Caco-2 (cell line): ENCODE measurements at regions of chr1 and their contacts with region 1.

Region 1: DNA sequence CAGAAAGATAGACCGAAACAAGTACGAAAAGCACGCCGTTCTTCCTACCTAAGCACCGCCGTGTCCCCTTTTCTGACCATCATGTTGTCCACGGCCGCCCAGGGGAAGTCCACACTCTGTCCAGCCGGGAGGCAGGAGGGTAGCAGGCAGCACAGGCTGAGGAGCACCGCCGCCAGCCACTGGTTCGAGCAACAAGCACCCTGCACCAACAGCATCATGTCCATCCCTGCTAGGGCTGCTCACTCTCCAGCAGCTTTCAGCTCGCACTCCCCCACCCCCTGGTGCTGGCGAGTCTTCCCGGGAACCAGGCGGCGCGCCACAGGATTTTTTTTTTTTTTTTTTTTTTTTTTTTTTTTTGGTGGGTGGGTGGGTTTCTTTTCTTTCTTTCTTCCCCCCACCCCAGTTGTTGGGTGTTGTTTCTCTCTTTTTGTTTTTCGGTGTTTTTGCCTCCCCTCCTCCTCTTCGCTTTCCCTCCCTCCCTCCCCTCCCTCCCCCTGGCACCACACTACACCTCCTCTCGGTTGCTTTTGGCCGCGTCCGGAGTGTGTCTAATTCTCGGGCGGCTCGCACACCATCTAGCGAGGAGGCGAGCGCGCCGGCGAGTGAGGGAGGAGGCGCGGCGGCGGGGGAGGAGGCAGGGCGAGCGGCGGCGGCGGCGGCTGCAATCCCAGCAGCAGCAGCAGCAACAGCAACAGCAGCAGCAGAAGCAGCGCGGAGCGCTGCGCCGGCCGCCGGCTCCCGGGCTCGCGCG is at the start of gene NEGR1:
- DNase-seq: peak; percentile 54 to 69
- H3K4me3 ChIP-seq: peak within 1 kb of the TSS; percentile 43
- H3K4me3 Mint-ChIP-seq: no peak within 1 kb of the TSS
- H3K27ac Mint-ChIP-seq: no peak within 1 kb of the TSS
- H3K4me1 ChIP-seq: no peaks in the 10 kb centered on the region
- H3K4me1 Mint-ChIP-seq: no peaks in the 10 kb centered on the region
- H3K27me3 ChIP-seq: no peaks in the 10 kb centered on the region; the same call in 1 of the 2 replicates
- H3K27me3 Mint-ChIP-seq: peaks cover 10% of the 10 kb centered on the region
- CTCF ChIP-seq: no peak
- total RNA-seq, gene NEGR1: 0.05 TPM in 1 of 2 replicates, not detected in the other

Region 2: DNA sequence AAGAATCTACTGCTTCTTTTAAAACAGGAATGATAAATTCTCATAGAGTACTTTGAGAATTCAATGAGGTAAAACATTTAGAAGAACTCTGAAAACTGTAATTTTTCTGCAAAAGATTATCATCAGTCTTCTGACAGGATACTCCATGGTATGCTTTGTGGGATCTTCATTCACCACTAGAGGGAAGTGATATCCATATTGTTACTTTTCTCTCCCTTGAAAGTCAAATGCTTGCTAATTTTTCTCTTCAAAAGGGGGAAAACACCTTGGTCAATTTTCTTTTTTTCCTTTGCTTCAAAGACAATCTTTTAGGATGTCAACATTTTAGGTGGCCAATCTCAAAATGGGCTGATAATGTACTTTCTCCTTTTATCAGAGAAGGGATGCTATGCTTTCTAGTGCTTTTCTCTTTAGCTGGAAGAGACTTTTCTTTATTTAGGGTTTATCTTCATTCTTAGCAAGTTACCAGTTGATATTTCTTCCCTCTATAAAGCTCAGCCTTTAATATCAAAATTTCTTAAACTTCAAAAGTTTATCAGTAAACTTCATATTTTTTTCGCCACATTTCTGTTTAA is 95.6 kb before region 1 on chr1:
- CTCF ChIA-PET with region 1: no interaction called
- POLR2A ChIA-PET with region 1: no interaction called
- intact Hi-C with region 1: loop called (anchors 5 kb)
- DNase-seq: no peak
- H3K4me3 ChIP-seq: no peak overlapping the region
- H3K4me3 Mint-ChIP-seq: no peak overlapping the region
- H3K27ac Mint-ChIP-seq: no peak overlapping the region
- H3K4me1 ChIP-seq: no peaks in the 10 kb centered on the region
- H3K4me1 Mint-ChIP-seq: no peaks in the 10 kb centered on the region
- H3K27me3 ChIP-seq: no peaks in the 10 kb centered on the region
- H3K27me3 Mint-ChIP-seq: no peaks in the 10 kb centered on the region
- CTCF ChIP-seq: peak; percentile 34 to 44

Region 3: DNA sequence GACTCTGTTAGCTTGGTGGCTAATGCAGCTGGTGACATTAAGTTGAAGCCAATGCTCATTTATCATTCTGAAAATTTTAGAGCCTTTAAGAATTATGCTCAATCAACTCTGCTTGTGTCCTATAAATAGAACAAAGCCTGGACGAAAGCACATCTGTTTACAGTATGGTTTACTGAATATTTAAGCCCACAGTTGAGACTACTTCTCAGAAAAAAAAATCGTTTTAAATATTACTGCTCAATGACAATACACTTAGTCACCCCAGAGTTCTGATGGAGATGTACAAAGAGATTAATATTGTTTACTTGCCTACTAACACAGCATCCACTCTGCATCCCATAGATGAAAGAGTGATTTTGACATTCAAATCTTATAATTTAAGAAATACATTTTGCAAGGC is 79.7 kb before region 1 on chr1:
- CTCF ChIA-PET with region 1: no interaction called
- POLR2A ChIA-PET with region 1: no interaction called
- intact Hi-C with region 1: loop called (anchors 5 kb)
- DNase-seq: no peak
- H3K4me3 ChIP-seq: no peak overlapping the region
- H3K4me3 Mint-ChIP-seq: no peak overlapping the region
- H3K27ac Mint-ChIP-seq: no peak overlapping the region
- H3K4me1 ChIP-seq: peaks cover 13% of the 10 kb centered on the region; the same call in 1 of the 2 replicates
- H3K4me1 Mint-ChIP-seq: peaks cover 8% of the 10 kb centered on the region
- H3K27me3 ChIP-seq: no peaks in the 10 kb centered on the region
- H3K27me3 Mint-ChIP-seq: no peaks in the 10 kb centered on the region
- CTCF ChIP-seq: no peak